PC-9 (cell line): ENCODE measurements at regions of chr3 and their contacts with region 1.

Region 1: GRCh38 chr3:47741925-47742324 is 39.8 kb downstream of the SMARCC1 start:
- DNase-seq: no peak
- H3K4me3 ChIP-seq: no peak overlapping the region
- H3K27ac ChIP-seq: no peak overlapping the region
- H3K4me1 ChIP-seq: no peaks in the 10 kb centered on the region
- H3K27me3 ChIP-seq: no peaks in the 10 kb centered on the region
- CTCF ChIP-seq: no peak

Region 2: GRCh38 chr3:47605652-47606051 is 136.3 kb before region 1 on chr3:
- CTCF ChIA-PET with region 1: no interaction called
- POLR2A ChIA-PET with region 1: interaction called, 15 read pairs
- intact Hi-C with region 1: no loop called
- DNase-seq: no peak
- H3K4me3 ChIP-seq: no peak overlapping the region
- H3K27ac ChIP-seq: no peak overlapping the region
- H3K4me1 ChIP-seq: no peaks in the 10 kb centered on the region
- H3K27me3 ChIP-seq: no peaks in the 10 kb centered on the region
- CTCF ChIP-seq: no peak